Right lobe of liver (tissue), 6 donors: ENCODE measurements at regions of chr3 and their contacts with region 1.

Region 1: GRCh38 chr3:57597122-57597923 is at the start of gene ARF4:
- DNase-seq: peak; percentile 99 to 100 (median 99)
- ATAC-seq: peak; percentile 90 to 97 (median 93)
- H3K4me3 ChIP-seq: peak within 1 kb of the TSS; percentile 75 to 87 (median 83)
- H3K27ac ChIP-seq: peak within 1 kb of the TSS; percentile 94 to 95 (median 95)
- H3K4me1 ChIP-seq: peaks cover 0 to 47% (median 15%) of the 10 kb centered on the region in 4 donors
- H3K27me3 ChIP-seq: no peaks in the 10 kb centered on the region
- CTCF ChIP-seq: peak in 3 of 4 donors; percentile 30 to 48 (median 41)
- POLR2A ChIP-seq: peak; percentile 99
- total RNA-seq, gene ARF4: 63.0 to 125 (median 92.7) TPM

Region 2: DNA sequence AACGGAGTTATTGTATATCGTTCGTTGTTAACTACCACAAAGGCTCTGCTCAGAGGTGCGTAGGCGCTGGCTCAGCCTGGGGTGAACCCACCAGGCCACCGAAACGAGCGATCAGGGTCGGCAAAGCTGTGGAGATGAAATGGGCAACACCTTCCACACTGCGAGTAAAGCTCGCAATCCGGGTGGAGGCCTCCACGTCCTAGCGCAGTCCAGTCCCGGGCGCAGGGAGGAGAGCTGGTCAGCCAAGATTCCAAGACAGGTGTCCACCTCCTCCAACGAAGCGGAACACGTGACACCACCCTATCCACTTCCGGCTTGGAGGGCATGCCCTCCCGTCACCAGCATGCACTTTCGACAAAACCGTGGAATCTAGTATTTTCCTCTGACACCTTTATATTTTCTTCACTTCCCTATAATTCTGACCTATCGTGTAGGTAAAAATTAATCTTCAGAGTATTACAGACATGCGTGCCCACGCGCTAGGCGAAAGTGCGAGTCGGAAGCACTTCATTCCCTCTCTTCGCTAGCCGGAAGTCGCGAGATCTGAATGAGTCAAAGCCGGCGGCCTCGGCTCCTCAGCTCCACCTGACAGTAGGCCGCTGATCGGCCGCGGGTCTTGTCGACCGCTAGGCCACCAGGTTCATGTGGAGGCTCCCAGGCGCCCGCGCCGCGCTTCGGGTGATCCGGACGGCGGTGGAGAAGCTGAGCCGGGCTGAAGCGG is 41.4 kb before region 1 on chr3 and contains the start of gene PDE12:
- intact Hi-C with region 1: loop called in 1 of 2 experiments (anchors 5 kb)
- DNase-seq: peak; percentile 88 to 91 (median 91)
- ATAC-seq: peak; percentile 91 to 95 (median 94)
- H3K4me3 ChIP-seq: peak within 1 kb of the TSS; percentile 77 to 90 (median 87)
- H3K27ac ChIP-seq: peak within 1 kb of the TSS; percentile 75 to 96 (median 91)
- H3K4me1 ChIP-seq: peaks cover 0 to 22% (median 10%) of the 10 kb centered on the region in 4 donors
- H3K27me3 ChIP-seq: no peaks in the 10 kb centered on the region
- CTCF ChIP-seq: no peak
- POLR2A ChIP-seq: peak; percentile 84
- total RNA-seq, gene PDE12: 12.1 to 20.7 (median 14.9) TPM

Region 3: GRCh38 chr3:57755668-57756527 is 158.6 kb after region 1 on chr3 and contains the start of gene SLMAP:
- intact Hi-C with region 1: loop called in 1 of 2 experiments (anchors 10 kb)
- DNase-seq: peak; percentile 97 to 99 (median 98)
- ATAC-seq: peak; percentile 95 to 98 (median 96)
- H3K4me3 ChIP-seq: peak within 1 kb of the TSS; percentile 77 to 85 (median 82)
- H3K27ac ChIP-seq: peak within 1 kb of the TSS; percentile 78 to 88 (median 83)
- H3K4me1 ChIP-seq: peaks cover 0 to 28% (median 13%) of the 10 kb centered on the region in 4 donors
- H3K27me3 ChIP-seq: no peaks in the 10 kb centered on the region
- CTCF ChIP-seq: no peak
- POLR2A ChIP-seq: peak; percentile 73
- total RNA-seq, gene SLMAP: 21.1 to 34.9 (median 25.1) TPM